ENCODE measurements at regions of chr5 and their contacts with region 1.

Region 1: DNA sequence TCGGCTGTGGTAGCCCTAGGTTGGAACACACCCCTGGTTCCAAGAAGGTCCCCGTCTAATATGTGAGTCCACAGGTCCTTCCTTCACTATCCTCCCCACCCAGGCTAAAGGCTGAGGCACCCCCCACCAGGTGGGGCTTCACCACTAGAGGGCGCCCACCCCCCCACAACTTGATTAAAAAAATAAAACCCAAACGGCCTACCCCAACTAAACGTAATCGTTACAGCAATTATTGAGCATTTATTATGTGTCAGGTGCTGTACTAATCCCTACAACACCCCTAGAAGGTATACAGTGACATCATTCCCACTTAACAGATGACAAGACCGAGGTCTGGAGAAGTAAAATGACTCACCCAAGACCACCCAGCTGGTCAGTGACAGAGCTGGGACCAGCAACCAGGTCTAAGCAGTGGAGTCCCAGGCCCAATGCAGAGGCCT is 65.0 kb downstream of the FGF18 start:
- DNase-seq: peak; percentile 59
- H3K4me3 Mint-ChIP-seq: no peak overlapping the region
- H3K27ac Mint-ChIP-seq: no peak overlapping the region
- H3K4me1 Mint-ChIP-seq: peaks cover 5% of the 10 kb centered on the region
- H3K27me3 Mint-ChIP-seq: peaks cover 11% of the 10 kb centered on the region

Region 2: DNA sequence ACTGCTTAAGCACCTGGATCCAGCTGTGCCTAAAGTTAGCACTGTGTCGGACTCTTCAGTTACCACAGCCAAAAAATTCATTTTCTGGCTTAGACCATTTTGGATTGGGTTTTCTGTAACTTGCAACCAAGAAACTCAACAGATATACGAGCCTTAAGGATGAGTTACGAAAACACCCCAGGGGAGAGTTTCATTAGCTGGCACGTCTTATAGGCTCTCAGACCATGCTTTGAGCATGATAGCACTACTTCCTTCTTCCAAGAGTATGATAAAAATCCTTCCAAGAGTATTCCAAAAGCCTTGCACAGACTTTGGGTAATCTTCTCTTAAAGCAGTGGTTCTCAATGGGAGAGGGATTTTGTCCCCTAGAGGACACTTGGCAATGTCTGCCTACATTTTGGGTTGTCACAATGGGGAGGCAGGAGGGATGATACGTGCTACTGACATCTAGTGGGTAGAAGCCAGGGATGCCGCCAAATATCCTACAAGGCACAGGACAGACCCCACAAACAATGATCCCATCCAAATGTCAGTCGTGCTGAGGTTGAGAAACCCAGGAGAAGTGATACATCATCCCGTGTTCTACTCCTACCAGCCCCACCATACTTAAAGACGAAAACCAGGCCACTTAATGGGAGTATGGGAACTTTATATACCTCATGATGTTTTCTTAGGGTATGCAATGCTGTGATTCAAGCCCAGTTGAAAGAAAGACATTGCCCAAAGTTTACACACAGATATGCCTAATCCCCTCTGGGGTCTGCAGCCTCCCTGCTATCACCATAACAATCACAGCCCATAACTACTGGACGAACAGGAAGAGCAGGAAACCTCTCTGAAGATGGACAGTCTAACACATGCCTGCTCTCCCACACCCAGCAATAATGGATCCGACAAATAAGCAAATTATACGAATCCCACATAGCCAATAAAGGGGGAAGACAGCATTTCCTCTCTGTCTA is 366.1 kb after region 1 on chr5:
- CTCF ChIA-PET with region 1: no interaction called
- intact Hi-C with region 1: loop called (anchors 10 kb)
- DNase-seq: peak; percentile 15
- H3K4me3 Mint-ChIP-seq: no peak overlapping the region
- H3K27ac Mint-ChIP-seq: no peak overlapping the region
- H3K4me1 Mint-ChIP-seq: peaks cover under 1% of the 10 kb centered on the region
- H3K27me3 Mint-ChIP-seq: no peaks in the 10 kb centered on the region

Measured in activated naive CD4-positive, alpha-beta T cell treated with anti-CD3 and anti-CD28 coated beads for 36 hours (primary cell).